GM10248 (cell line): ENCODE measurements at regions of chr11 and their contacts with region 1.

Region 1: DNA sequence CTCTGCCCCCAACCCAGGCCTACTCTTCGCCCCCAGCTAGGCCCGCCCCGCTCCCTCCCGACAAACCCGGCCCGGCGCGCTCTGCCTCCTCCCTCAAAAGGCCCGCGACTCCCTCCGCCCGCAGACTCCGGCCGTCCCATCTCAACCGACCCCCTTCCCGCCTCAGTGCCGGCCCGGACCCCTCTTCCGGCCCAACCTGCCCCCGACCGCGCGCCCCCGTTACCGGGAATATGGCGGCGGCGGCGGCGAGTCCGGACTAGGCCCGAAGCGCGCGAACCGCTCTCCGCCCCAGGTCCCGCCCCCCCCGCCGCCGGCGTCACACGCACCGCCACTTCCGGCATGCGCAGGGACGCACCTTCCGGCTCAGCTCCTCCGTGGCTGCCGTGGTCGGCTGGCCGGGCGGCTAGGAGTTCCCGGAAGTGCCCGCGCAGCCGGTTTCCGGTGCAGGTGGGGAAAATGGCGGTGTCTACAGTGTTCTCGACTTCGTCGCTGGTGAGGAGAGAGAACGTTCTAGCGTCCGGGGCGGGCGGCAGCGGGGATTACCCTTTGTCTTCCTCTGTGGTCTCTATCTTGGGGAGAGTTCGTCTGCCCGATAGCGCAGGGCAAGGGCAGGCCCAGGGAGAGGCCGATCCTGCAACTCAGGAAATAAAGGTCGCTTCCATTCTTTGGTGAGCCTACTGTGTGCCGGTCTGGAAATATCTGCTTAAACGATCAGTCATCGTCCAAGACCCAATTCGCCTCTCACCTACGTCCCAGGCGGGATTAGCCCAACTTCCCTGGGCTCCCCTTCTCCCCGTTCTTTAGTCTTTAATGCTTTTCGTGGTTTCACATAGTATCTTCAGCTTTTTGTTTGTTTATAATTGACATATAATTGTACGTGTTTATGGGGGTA is at the starts of genes CPSF7 and SDHAF2:
- DNase-seq: peak; percentile 97
- CTCF ChIP-seq: no peak

Region 2: GRCh38 chr11:61361686-61362541 is 68.0 kb before region 1 on chr11 and contains the starts of genes CYB561A3 and TMEM138:
- CTCF ChIA-PET with region 1: interaction called, 18 read pairs
- POLR2A ChIA-PET with region 1: interaction called, 7 read pairs
- DNase-seq: peak; percentile 92
- CTCF ChIP-seq: no peak

Region 3: GRCh38 chr11:61446211-61446651 is 16.3 kb after region 1 on chr11:
- CTCF ChIA-PET with region 1: interaction called, 126 read pairs
- POLR2A ChIA-PET with region 1: interaction called, 3 read pairs
- DNase-seq: peak; percentile 77
- CTCF ChIP-seq: peak; percentile 88

Region 4: DNA sequence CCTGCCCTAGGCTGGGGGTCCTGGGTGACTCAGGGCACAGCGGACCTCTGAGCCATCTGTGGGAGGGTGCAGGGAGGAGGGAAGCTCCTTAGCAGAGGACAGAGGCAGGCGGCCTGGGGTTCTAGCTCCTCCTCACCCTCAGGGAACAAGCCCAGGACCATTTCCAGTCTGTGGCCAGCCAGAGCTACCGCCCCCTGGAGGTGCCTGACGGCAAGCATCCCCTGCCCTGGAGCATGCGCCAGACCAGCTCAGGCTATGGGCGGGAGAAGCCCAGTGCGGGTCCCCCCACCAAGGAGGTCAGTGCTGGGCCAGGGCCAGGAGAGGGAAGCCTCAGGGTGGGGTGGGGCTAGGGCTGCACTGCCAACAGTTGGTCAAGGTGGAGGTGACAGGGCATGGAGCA is 52.6 kb after region 1 on chr11:
- CTCF ChIA-PET with region 1: no interaction called
- POLR2A ChIA-PET with region 1: no interaction called
- DNase-seq: peak; percentile 58
- CTCF ChIP-seq: peak; percentile 61

Region 5: DNA sequence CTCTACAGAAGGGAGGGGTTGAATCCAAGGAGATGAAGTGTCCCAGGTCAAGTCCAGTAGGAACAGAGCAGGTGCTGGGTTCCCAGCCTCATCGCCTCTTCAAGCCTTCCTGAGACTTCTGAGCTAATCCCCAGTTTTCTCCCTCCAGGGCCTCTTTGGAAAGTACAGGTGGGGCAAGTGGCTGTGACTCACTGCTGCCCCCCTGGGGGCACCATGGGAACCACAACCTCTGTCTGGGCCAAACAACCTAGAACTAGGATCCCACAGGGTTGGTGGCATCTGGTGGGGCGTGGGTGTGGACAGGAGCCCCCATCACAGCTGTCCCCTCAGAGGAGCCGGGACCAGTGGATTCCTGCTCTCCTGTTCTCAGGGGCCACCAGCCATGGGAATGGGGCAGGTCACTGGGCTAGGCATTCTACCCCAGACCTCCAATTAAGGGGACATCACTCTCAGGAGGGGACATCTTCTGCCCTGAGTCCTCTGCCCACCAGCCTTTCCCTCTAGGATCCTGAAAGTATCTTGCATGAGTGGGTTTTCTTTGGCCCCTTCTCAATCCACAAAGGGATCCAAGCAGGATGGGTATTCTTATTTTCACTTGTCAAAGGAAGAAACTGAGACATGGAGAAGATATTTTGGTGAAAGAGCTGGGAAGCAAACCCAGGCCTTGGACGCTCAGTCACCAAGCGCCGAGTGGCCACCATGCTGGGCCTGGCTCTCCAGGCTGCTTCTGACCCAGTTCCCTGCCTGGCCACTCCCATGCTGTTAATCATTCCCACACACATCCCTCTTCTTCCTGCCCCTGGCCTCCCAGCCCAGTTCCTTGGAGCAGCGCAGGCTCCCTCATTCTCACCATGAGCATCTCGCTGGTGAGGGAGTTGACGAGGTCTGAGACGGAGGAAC is 102.5 kb after region 1 on chr11:
- CTCF ChIA-PET with region 1: interaction called, 12 read pairs
- POLR2A ChIA-PET with region 1: no interaction called
- DNase-seq: peak; percentile 85
- CTCF ChIP-seq: peak; percentile 87